ENCODE measurements at regions of chr22 and their contacts with region 1.

Region 1: DNA sequence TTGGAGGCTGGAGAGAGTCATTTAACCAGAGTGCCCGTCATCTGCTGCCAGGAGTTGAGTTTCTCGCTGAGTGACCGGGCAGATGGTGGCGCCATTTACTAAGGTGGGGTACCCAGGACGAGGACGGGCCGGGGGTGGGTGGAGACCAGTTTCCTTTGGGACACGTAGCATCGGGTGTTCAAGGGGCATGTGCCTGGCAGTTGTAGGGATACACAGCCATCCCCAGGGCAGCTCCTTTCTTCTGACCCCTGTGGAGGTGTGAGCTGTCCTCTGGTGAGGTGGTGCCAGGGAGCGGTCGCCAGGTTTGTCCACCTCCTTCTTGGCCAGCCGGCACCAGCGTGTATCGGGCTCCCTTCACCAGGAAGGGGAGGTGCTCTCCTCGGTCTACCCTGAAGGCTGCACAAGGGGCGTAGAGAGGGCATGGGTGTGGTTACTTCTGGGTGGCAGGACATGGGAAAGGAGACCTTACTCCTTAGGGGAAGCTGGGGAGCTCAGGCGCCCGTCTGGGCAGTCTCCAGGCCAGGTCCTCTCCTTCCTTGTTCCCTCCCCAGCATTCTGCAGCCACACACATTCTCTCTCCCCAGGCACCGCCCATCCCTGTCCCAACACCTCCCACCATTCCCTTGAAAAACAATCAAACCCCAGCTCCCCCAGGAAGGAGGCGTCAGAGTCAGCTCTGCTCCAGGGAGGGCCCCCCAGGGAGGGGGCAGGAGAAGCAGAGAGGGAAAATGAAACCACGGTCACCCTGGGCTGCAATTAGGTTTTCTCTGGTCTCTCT is 10.3 kb upstream of the MB start:
- DNase-seq: peak; percentile 91
- H3K4me3 ChIP-seq: peak overlapping the region; percentile 52 to 68
- H3K27ac ChIP-seq: peak overlapping the region; percentile 50 to 78
- H3K4me1 ChIP-seq: peaks cover 10% of the 10 kb centered on the region
- H3K27me3 ChIP-seq: no peaks in the 10 kb centered on the region
- CTCF ChIP-seq: peak in 2 of 3 experiments; percentile 13 to 52
- POLR2A ChIP-seq: no peak

Region 2: DNA sequence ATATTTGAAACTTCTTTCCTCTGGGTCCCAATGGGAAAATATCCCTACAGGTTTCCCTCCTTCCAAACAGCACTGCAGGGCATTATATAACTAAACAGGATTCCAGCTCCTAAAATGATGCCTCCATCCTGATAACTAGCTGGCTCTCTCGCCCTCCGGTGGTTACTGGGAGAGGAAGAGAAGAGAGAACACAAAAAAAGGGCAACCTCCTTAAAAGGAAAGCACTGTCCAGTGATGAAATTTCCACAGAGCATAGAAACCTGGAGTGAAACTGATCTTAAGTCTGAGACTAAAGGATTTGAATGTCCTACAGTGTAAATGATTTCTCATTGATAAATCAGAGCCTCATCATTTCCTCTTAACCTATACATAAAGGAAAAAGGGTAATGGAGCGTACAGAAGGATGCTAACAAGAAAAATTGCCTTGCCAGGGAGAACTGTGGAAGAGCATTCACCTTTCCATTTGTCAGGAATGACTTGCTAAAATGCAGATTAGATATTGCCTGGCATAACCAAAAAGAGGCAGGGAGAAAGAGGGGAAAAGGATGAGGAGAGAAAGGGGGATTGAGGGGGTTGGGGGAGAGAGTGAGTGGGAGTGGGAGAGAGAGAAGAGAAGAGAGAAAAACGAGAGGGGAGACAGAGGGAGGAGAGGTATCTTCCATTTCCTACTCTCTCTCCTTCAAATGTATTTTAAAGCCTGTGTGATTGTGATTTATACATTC is 211.6 kb after region 1 on chr22:
- intact Hi-C with region 1: loop called (anchors 10 kb)
- DNase-seq: peak; percentile 59
- H3K4me3 ChIP-seq: no peak overlapping the region
- H3K27ac ChIP-seq: peak overlapping the region; percentile 53 to 76
- H3K4me1 ChIP-seq: peaks cover 21% of the 10 kb centered on the region
- H3K27me3 ChIP-seq: no peaks in the 10 kb centered on the region
- CTCF ChIP-seq: peak; percentile 8 to 27 (median 24)
- POLR2A ChIP-seq: no peak

Region 3: DNA sequence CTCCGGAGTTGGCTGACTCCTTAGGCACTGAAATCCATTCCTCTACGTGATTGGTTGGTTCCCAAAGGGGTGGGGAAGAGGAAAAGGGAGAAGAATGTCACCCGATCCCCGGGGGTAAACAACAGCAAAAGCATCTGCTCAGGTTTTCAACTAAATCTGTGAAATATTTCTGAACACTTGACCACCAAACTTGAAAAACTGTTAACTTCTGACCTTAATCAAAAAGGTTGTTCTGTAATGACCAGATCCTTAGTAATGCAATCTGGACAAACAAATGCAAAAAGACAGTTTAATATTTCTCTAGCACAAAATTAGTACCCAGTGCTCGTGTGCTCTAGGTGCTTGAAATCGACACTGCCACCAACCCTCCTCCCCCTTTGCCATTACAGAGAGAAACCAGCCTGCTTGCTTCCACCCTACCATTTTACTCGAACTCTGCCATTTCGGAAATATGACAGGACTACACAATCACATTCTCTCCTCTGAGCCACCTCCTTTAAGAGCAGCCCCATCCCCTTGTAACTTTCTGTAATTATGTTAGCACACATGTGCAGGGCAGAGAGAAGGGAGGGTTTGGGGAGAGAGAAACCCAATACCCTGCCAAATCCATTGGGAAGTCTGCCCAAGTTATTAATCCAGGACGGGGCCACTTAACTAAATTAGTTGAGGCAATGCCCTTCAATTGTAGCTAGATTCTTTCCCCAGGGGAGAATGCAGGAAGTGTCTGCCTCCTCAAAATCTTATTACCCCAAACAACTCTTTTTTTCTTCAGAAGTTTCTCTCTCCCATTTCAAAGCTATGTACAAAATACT is 287.4 kb after region 1 on chr22:
- intact Hi-C with region 1: loop called (anchors 10 kb)
- DNase-seq: peak; percentile 85
- H3K4me3 ChIP-seq: peak overlapping the region; percentile 2 to 15
- H3K27ac ChIP-seq: peak overlapping the region; percentile 70 to 74
- H3K4me1 ChIP-seq: peaks cover 39% of the 10 kb centered on the region
- H3K27me3 ChIP-seq: no peaks in the 10 kb centered on the region
- CTCF ChIP-seq: no peak
- POLR2A ChIP-seq: no peak

Measured in testis (tissue), 5 donors.